Caco-2 (cell line): ENCODE measurements at regions of chr1 and their contacts with region 1.

Region 1: DNA sequence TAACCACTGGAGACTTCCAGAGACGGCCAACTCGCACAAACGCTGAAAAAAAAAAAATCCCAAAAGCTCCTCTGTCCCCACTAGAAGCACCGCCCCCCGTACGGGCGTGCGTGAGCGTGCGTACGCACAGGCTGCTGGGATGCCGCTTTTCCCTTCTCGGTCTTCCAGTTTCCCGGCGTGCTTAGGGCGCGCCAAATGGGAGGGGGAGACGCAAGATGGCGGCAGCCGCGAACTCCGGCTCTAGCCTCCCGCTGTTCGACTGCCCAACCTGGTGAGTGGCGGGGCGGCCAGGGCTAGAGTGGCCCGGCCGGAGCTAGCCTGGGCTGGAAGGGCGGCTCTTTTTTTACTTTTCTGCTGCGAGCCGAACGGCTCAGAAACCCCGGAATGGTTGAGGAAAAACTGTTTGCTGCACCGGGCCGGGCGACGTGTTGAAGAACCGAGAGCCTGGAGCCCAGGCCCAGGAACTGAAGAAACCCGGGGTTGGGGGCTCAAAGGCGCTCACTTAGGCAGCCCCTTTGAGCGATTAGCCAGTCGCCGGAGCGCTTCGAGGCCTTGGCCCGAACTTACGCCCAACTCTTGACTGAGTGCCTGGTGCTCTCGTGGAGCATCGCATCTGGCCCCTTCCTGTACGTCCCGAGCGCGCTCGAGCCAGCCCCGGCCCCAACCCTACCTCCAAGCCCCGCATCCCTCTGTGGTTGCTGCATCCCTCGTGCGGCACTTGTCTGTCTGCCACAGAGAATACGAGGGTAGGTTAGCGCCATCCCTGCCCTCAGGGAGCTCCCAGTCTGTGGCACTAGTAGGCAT is at the start of gene PPP1R8:
- DNase-seq: peak; percentile 91 to 93
- H3K4me3 ChIP-seq: peak within 1 kb of the TSS; percentile 91
- H3K4me3 Mint-ChIP-seq: peak within 1 kb of the TSS; percentile 83
- H3K27ac Mint-ChIP-seq: peak within 1 kb of the TSS; percentile 93
- H3K4me1 ChIP-seq: peaks cover 6% of the 10 kb centered on the region; the same call in 1 of the 2 replicates
- H3K4me1 Mint-ChIP-seq: peaks cover 10% of the 10 kb centered on the region
- H3K27me3 ChIP-seq: no peaks in the 10 kb centered on the region
- H3K27me3 Mint-ChIP-seq: no peaks in the 10 kb centered on the region
- CTCF ChIP-seq: no peak
- total RNA-seq, gene PPP1R8: 37.2 and 40.6 TPM in 2 replicates

Region 2: GRCh38 chr1:27744556-27744955 is 86.3 kb before region 1 on chr1:
- CTCF ChIA-PET with region 1: no interaction called
- POLR2A ChIA-PET with region 1: no interaction called
- intact Hi-C with region 1: no loop called
- DNase-seq: no peak
- H3K4me3 ChIP-seq: no peak overlapping the region
- H3K4me3 Mint-ChIP-seq: no peak overlapping the region
- H3K27ac Mint-ChIP-seq: no peak overlapping the region
- H3K4me1 ChIP-seq: no peaks in the 10 kb centered on the region
- H3K4me1 Mint-ChIP-seq: no peaks in the 10 kb centered on the region
- H3K27me3 ChIP-seq: no peaks in the 10 kb centered on the region
- H3K27me3 Mint-ChIP-seq: no peaks in the 10 kb centered on the region
- CTCF ChIP-seq: no peak

Region 3: GRCh38 chr1:27760426-27760825 is 70.4 kb before region 1 on chr1:
- CTCF ChIA-PET with region 1: interaction called, 4 read pairs
- POLR2A ChIA-PET with region 1: no interaction called
- intact Hi-C with region 1: loop called (anchors 1 kb)
- DNase-seq: peak; percentile 35 to 36
- H3K4me3 ChIP-seq: no peak overlapping the region
- H3K4me3 Mint-ChIP-seq: no peak overlapping the region
- H3K27ac Mint-ChIP-seq: no peak overlapping the region
- H3K4me1 ChIP-seq: no peaks in the 10 kb centered on the region
- H3K4me1 Mint-ChIP-seq: no peaks in the 10 kb centered on the region
- H3K27me3 ChIP-seq: no peaks in the 10 kb centered on the region
- H3K27me3 Mint-ChIP-seq: no peaks in the 10 kb centered on the region
- CTCF ChIP-seq: peak in 1 of 2 experiments; percentile 28

Region 4: GRCh38 chr1:27816921-27817630 is 13.7 kb before region 1 on chr1:
- CTCF ChIA-PET with region 1: no interaction called
- POLR2A ChIA-PET with region 1: interaction called, 22 read pairs
- intact Hi-C with region 1: loop called (anchors 1 kb)
- DNase-seq: peak; percentile 80 to 87
- H3K4me3 ChIP-seq: no peak overlapping the region
- H3K4me3 Mint-ChIP-seq: peak overlapping the region; percentile 62
- H3K27ac Mint-ChIP-seq: peak overlapping the region; percentile 94
- H3K4me1 ChIP-seq: peaks cover 23% of the 10 kb centered on the region
- H3K4me1 Mint-ChIP-seq: peaks cover 22% of the 10 kb centered on the region
- H3K27me3 ChIP-seq: no peaks in the 10 kb centered on the region
- H3K27me3 Mint-ChIP-seq: no peaks in the 10 kb centered on the region
- CTCF ChIP-seq: no peak